Body of pancreas (tissue), 4 donors: ENCODE measurements at regions of chrX and their contacts with region 1.

Region 1: DNA sequence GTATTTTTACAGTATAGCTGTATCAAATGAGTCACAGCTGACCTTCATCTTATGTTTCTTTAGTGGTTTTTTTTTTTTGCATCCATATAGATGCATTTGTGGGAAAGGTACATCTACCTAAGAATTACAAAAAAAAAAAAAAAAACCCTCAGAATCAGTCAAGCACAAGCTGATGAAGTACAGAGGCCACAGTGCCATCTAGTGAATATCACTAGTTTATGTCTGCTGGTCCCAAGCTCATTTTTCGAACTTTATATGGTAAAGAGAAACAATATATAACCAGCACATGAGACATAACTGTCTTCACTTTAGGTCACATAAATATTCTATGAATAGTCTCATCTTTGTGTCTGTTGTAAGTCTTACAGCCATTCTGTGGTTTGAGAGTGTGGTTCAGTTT is 220.1 kb downstream of the DLG3 start:
- DNase-seq: peak; percentile 9 to 37 (median 18)
- ATAC-seq: no peak
- H3K4me3 ChIP-seq: no peak overlapping the region
- H3K27ac ChIP-seq: no peak overlapping the region
- H3K4me1 ChIP-seq: no peaks in the 10 kb centered on the region
- H3K27me3 ChIP-seq: no peaks in the 10 kb centered on the region
- CTCF ChIP-seq: peak in 6 of 7 experiments; percentile 21 to 55 (median 44)
- POLR2A ChIP-seq: no peak

Region 2: GRCh38 chrX:70422851-70423341 is 241.8 kb before region 1 on chrX and contains the start of gene GDPD2:
- intact Hi-C with region 1: loop called (anchors 10 kb)
- DNase-seq: peak; percentile 32 to 62 (median 54)
- ATAC-seq: peak; percentile 83
- H3K4me3 ChIP-seq: no peak within 1 kb of the TSS
- H3K27ac ChIP-seq: no peak within 1 kb of the TSS
- H3K4me1 ChIP-seq: no peaks in the 10 kb centered on the region
- H3K27me3 ChIP-seq: no peaks in the 10 kb centered on the region
- CTCF ChIP-seq: peak in 5 of 7 experiments; percentile 10 to 61 (median 45)
- POLR2A ChIP-seq: no peak
- total RNA-seq, gene GDPD2: 0.26 TPM in 1 of 2 donors, not detected in the other